Ovary (tissue), 10 donors: ENCODE measurements at regions of chr1 and their contacts with region 1.

Region 1: GRCh38 chr1:110619412-110620249 is 13.5 kb upstream of the KCNA2 start:
- DNase-seq: peak; percentile 62 to 83 (median 77)
- H3K4me3 ChIP-seq: no peak overlapping the region
- H3K27ac ChIP-seq: no peak overlapping the region
- H3K4me1 ChIP-seq: peaks cover 3% of the 10 kb centered on the region
- H3K27me3 ChIP-seq: no peaks in the 10 kb centered on the region
- CTCF ChIP-seq: peak; percentile 70 to 79 (median 73)
- EP300 ChIP-seq: no peak
- POLR2A ChIP-seq: no peak

Region 2: DNA sequence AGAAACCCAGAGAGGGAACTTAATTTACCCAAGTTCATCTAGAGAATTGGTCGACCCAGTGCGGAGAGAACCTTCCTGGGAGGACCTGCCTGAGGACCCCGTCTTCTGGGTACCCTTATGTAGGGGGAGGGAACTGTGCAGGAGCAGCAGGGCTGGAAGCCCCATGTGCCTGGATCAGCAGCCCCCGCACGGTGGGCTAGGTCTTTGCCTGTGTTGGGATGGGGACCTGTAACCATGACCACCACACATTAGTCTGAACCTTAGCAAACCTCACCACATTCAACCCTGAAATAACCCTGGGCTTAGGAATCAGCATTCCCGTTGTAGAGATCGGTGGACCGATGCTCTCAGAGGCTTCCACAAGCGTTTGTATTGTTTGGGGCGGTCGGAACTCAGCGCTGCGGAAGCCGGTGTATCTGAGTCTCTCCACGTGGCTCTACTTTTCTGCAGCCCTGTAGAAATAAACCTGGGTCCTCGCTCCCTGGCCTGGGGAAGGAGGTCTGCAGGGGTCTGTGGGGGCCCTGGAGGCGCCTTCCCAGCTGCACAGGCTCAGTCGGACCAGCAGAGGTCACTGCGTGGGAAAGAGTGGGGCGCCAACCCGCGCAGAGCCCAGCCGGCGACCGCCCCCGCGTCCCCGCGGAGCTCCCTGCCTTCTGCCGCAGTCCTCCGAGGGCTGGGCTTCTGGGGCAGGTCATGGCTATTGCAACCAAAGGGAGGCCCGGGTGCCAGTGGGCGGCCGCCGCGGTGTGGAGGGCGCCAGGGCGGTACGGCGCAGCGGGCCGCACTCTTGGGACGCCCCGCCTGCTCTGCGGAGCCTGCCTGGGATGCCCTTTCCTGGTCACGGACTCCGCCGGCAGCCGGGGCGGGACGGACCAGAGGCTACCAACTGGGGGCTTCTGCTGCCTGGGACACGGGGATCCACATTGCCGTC is 64.5 kb before region 1 on chr1:
- intact Hi-C with region 1: loop called in 1 of 4 experiments (anchors 10 kb)
- DNase-seq: peak in 4 of 5 donors; percentile 10 to 56 (median 38)
- H3K4me3 ChIP-seq: peak overlapping the region; percentile 0
- H3K27ac ChIP-seq: no peak overlapping the region
- H3K4me1 ChIP-seq: no peaks in the 10 kb centered on the region
- H3K27me3 ChIP-seq: no peaks in the 10 kb centered on the region
- CTCF ChIP-seq: peak in 1 of 3 donors; percentile 30
- EP300 ChIP-seq: no peak
- POLR2A ChIP-seq: no peak

Region 3: GRCh38 chr1:110672001-110672752 is 52.5 kb after region 1 on chr1:
- intact Hi-C with region 1: no loop called
- DNase-seq: peak in 1 of 5 donors; percentile 22
- H3K4me3 ChIP-seq: no peak overlapping the region
- H3K27ac ChIP-seq: no peak overlapping the region
- H3K4me1 ChIP-seq: peaks cover 5% of the 10 kb centered on the region
- H3K27me3 ChIP-seq: no peaks in the 10 kb centered on the region
- CTCF ChIP-seq: no peak
- EP300 ChIP-seq: no peak
- POLR2A ChIP-seq: no peak

Region 4: GRCh38 chr1:111990878-111991718 is 1371.5 kb after region 1 on chr1:
- intact Hi-C with region 1: loop called in 1 of 4 experiments (anchors 10 kb)
- DNase-seq: peak in 3 of 5 donors; percentile 38 to 65 (median 44)
- H3K4me3 ChIP-seq: peak overlapping the region; percentile 52
- H3K27ac ChIP-seq: no peak overlapping the region
- H3K4me1 ChIP-seq: peaks cover 11% of the 10 kb centered on the region
- H3K27me3 ChIP-seq: no peaks in the 10 kb centered on the region
- CTCF ChIP-seq: no peak
- EP300 ChIP-seq: no peak
- POLR2A ChIP-seq: no peak